Posterior cingulate gyrus (tissue), 11 donors: ENCODE measurements at regions of chr1 and their contacts with region 1.

Region 1: DNA sequence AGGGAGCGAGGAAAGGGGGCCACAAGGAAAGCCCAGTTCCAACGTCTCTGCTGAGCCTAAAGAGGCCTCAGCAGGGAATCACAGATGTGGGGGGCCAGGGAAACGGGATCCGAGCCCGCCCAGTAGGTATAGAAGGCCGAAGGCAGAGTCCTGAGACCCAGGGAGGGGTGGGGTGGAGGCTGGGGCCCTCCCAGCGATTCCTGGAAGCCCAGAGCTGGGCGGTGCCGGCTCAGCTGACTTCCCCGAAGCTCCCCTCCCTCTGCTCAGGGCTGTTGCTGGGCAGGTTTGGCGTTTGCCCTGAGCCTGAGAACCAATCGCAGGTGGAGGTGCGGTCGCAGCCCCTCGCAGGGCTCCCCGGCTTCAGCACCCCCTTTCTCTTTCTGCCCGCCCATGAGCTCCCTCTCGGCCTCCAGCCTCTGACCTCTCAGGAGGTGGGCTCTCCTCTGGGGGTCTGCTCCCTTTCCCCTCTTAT is 12.8 kb downstream of the ADAMTSL4 start:
- DNase-seq: peak in 9 of 10 donors; percentile 57 to 95 (median 75)

Region 2: GRCh38 chr1:150621497-150622302 is 59.7 kb after region 1 on chr1:
- intact Hi-C with region 1: loop called (anchors 2 kb)
- DNase-seq: peak in 4 of 10 donors; percentile 14 to 55 (median 30)